ENCODE measurements at regions of chr15 and their contacts with region 1.

Region 1: DNA sequence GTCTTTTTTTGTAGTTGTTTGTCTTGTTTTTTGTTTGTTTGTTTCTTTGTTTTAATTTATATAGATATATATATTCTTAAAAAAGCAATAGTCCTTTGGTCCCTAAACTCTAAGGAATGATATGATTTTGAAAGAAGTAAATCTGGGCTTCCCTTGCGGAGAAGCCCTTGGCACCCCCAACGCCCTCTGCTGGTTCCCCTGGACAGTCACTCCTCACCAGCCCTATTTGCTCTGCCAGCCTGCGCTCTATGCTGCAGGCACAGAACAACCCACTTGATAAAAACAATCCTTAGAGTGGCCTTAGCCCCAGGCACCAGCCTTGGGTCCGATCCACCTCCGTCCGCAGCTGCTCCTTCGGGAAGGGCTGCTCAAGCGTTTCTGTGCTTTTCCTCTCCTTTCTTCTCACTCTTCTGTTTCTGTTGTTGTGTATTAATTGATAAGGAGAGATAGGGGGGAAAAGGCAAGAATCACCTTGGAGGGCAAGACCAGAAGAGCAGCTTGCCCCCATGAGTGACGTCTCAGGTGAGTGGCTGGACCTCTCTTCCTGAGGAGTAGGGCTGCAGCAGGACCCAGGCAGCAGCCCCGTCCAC is 13.7 kb upstream of the PARP6 start:
- DNase-seq: peak; percentile 75
- ATAC-seq: peak; percentile 92
- H3K4me3 Mint-ChIP-seq: no peak overlapping the region
- H3K27ac Mint-ChIP-seq: no peak overlapping the region
- H3K4me1 Mint-ChIP-seq: no peaks in the 10 kb centered on the region
- H3K27me3 Mint-ChIP-seq: peaks cover 21% of the 10 kb centered on the region
- CTCF ChIP-seq: no peak; the same call in none of the 2 replicates

Region 2: DNA sequence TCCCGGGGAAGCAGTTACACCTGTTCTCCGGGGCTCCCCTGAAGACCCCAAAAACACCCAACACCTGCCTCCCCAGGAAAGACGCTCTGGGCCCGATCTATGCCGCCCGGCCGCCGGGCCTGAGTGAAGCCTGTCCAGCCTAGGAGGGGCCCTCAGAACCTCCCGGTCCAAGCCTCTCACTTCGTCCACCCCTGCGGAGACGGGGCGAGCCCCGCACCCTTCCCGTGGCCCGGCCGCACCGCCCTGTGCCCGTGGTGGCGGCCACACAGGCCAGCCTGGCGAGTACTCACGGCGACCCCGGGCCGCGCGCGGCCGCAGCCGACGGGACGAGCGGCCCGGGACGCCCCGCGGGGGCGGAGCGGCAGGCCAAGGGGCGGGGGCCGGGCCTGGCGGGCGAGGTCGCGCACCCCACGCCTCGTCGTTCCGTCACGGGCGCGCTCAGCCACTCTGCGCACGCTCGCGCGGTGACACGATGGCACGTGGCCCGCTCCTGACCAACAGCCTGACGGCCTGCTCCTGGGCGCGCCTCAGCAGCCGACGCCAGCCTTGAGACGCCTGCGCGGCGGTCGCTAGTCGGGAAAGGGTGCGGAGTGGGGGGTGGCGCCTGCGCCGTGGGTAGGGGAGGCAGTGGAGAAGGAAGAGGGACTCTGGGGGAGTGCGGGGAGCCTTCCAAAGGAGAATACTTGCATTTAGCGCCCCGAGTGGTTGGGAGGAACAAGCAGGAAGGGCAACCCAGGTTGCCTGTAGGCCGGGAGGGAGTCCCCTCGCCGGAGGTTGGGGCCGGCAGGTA is 13.6 kb before region 1 on chr15 and contains the start of gene PARP6:
- CTCF ChIA-PET with region 1: interaction called, 12 read pairs
- POLR2A ChIA-PET with region 1: no interaction called
- DNase-seq: peak; percentile 97
- ATAC-seq: peak; percentile 98
- H3K4me3 Mint-ChIP-seq: peak within 1 kb of the TSS; percentile 84
- H3K27ac Mint-ChIP-seq: peak within 1 kb of the TSS; percentile 44
- H3K4me1 Mint-ChIP-seq: peaks cover 17% of the 10 kb centered on the region
- H3K27me3 Mint-ChIP-seq: peaks cover 24% of the 10 kb centered on the region
- CTCF ChIP-seq: no peak
- total RNA-seq, gene PARP6: 40.8 to 42.1 TPM (median 41.9 TPM) in 3 replicates

Measured in WTC11 (cell line).